ENCODE measurements at regions of chr1 and their contacts with region 1.

Region 1: GRCh38 chr1:59323879-59324278 is 27.0 kb downstream of the FGGY start:
- DNase-seq: no peak
- ATAC-seq: no peak
- H3K4me3 ChIP-seq: no peak overlapping the region
- H3K27ac ChIP-seq: no peak overlapping the region
- H3K4me1 ChIP-seq: no peaks in the 10 kb centered on the region
- H3K27me3 ChIP-seq: no peaks in the 10 kb centered on the region
- CTCF ChIP-seq: no peak

Region 2: DNA sequence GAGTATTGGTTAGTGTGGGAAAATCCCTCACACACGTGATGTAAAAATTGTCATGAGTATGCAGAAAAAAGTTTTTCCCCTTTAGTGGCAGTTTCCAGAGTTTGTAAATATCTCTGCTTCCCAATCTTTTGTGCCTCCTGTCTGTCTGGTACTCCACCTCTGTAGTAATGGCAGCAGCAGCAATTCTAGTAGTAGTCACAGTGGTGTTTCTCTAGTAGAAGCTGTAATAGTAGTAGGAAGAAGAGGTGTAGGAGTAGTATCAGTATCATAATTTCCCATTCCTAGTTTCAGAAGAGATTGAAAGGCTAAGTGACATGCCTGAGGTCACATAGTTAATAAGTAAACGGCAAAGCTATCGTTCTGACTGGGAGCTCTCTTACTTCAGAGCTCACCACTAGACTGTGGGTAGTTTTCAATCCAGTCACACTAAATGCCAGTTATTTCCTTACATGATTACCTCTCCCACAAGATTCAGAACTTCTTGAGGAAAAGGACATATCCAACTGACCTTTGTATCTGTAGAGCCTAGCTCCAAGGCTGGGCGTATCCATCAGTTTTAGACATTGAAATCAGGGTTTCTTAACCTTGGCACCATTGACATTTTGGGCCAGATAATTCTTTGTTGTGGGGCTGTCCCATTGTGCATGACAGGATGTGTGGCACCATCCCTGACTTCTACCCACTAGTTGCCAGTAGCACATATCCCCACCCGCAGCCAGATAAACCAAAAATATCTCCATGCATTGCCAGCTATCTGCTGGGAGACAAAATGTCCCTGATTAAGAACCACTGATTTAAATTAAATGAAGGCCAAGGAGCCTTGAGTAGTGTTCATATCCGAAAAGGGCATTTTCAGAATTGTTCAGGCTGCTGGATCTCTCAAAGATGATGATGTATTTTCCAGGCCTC is 108.9 kb after region 1 on chr1:
- intact Hi-C with region 1: no loop called
- DNase-seq: no peak
- ATAC-seq: peak; percentile 83 to 95 (median 93)
- H3K4me3 ChIP-seq: no peak overlapping the region
- H3K27ac ChIP-seq: peak overlapping the region in 3 of 4 donors; percentile 28 to 78 (median 77)
- H3K4me1 ChIP-seq: peaks cover 7 to 11% (median 8%) of the 10 kb centered on the region in 3 donors
- H3K27me3 ChIP-seq: no peaks in the 10 kb centered on the region
- CTCF ChIP-seq: no peak

Region 3: DNA sequence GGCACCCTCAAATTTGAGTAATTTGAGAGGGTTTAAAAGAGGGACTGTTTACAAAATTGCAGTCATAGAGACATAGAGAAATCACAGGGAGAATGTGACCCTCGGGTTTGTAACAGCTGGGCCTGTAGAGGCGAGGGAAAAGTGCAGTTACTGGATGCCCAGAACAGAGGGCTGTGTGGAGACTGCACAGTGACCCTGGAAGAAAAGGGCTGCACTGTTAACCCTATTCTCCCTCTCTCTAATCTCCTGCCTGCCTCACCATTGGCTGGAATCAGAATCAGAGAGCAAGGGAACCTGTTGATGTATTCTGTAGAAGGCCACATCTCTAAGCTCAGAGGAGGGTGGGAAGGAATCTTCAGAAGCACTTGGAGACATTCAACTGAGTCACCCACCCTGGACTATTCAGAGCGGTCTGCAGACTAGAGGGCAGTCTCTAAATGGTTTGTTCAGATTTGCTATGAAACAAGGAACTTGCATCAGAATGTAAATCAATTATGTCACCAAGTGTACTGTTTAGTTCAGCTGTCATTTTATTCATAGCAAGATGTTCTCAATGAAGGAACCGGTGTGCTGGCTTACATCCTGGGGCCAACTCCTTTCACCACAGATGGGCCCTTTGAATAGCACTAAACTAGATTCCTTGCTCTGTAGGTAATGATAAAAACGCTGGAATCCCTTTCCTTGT is 358.7 kb after region 1 on chr1:
- intact Hi-C with region 1: loop called in 1 of 3 experiments (anchors 10 kb)
- DNase-seq: no peak
- ATAC-seq: peak in 3 of 4 donors; percentile 18 to 59 (median 29)
- H3K4me3 ChIP-seq: no peak overlapping the region
- H3K27ac ChIP-seq: no peak overlapping the region
- H3K4me1 ChIP-seq: peaks cover 0 to 7% (median 5%) of the 10 kb centered on the region in 3 donors
- H3K27me3 ChIP-seq: no peaks in the 10 kb centered on the region
- CTCF ChIP-seq: no peak